ENCODE measurements at regions of chr3 and their contacts with region 1.

Region 1: GRCh38 chr3:129305592-129306091 is 27.0 kb downstream of the HMCES start:
- DNase-seq: peak; percentile 76 to 91 (median 84)
- ATAC-seq: peak; percentile 95
- H3K4me3 ChIP-seq: no peak overlapping the region
- H3K27ac ChIP-seq: peak overlapping the region; percentile 64; the same call in 2 of the 3 replicates
- H3K4me1 ChIP-seq: peaks cover 11 to 13% of the 10 kb centered on the region in 2 experiments; a peak in 4 of 5 replicates
- H3K27me3 ChIP-seq: no peaks in the 10 kb centered on the region
- CTCF ChIP-seq: no peak
- EP300 ChIP-seq: no peak
- POLR2A ChIP-seq: no peak
- RAD21 ChIP-seq: no peak

Region 2: DNA sequence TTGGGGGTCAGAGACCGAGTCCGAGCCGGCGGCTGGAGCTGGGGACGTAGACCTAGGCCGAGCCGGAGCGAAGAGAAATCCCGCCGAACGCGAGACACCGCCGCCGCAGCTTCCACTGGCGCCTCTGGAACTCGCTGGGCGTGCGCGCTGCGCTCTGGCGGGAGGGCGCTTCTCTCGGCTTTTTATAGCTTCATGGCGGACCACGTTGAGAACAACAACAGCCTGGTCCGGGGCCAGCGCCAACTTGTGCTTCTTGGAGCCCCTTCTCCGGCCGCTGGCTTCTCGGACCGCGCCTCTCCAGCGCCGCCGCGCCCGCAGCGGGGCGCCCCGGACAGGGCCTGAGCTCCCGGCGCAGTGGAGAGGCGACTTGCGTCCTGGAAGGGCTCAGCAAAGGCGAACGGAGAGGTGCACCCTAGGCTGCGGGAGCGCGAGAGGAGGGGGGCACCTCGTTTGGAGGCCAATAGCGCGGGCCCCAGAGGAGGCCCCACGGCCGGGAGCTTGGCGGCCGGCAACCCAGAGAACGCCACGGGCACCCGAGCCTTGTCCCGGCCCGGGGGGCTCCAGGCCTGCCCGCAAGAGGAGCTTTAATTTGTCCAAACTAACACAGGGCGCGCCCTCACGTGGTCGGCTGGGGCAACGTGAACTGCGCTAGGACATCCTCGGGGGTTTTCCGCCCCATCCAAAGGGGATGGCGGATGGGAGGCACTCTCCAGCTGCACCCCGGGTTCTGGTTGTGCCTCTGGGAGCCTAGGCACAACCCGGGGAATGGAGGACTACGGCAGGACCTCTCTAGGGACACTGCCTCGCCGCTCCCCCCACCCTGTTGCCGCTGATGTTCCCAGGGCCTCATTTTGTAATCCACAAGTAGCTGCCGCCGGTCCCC is 10.7 kb after region 1 on chr3:
- CTCF ChIA-PET with region 1: no interaction called
- POLR2A ChIA-PET with region 1: interaction called, 10 read pairs
- in situ Hi-C with region 1: no loop called
- intact Hi-C with region 1: no loop called
- DNase-seq: peak; percentile 73 to 87 (median 80)
- ATAC-seq: peak; percentile 62
- H3K4me3 ChIP-seq: peak overlapping the region; percentile 78
- H3K27ac ChIP-seq: peak overlapping the region; percentile 80; the same call in 2 of the 3 replicates
- H3K4me1 ChIP-seq: peaks cover 18 to 38% of the 10 kb centered on the region in 2 experiments; a peak in 4 of 5 replicates
- H3K27me3 ChIP-seq: no peaks in the 10 kb centered on the region
- CTCF ChIP-seq: peak; percentile 43 to 60 (median 58); a peak in 5 of 6 replicates
- EP300 ChIP-seq: no peak
- POLR2A ChIP-seq: peak; percentile 96
- RAD21 ChIP-seq: peak in 1 of 2 experiments; percentile 45; a peak in 2 of 4 replicates

Region 3: DNA sequence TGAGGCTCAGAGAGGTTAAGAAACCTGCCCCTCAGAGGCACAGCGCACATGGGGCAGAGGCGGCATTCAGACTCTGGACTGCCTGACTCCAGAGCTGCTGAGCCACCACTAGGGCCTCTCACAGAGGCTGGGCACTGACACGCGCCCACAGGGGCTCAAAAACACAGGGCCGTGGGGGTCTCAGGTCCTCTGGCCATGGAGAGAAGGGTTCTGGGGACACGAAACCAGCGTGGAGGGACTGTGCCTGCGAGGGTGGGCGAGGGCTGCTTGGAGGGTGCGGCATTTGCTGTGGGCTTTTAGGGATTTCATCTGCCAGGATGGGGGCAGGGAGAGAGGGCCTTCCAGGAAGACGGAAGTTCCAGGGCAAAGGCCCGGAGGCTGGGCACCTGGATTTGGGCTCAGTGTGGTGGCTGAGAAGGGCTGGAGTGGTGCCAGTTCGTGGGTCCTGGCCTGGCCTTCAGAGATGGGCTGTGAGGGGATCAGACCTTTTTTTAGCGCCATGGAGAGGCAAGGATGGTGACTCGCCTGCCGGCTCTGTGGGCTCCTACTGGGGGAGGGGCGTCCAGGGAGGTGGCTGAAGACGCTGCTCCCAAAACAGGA is 53.2 kb after region 1 on chr3:
- CTCF ChIA-PET with region 1: no interaction called
- POLR2A ChIA-PET with region 1: no interaction called
- in situ Hi-C with region 1: no loop called
- intact Hi-C with region 1: no loop called
- DNase-seq: no peak
- ATAC-seq: no peak
- H3K4me3 ChIP-seq: no peak overlapping the region
- H3K27ac ChIP-seq: no peak overlapping the region
- H3K4me1 ChIP-seq: peaks cover 3 to 21% of the 10 kb centered on the region in 2 experiments; a peak in 4 of 5 replicates
- H3K27me3 ChIP-seq: no peaks in the 10 kb centered on the region
- CTCF ChIP-seq: no peak
- EP300 ChIP-seq: no peak
- POLR2A ChIP-seq: no peak
- RAD21 ChIP-seq: no peak

Measured in K562 (cell line).